CD8-positive, alpha-beta T cell (primary cell): ENCODE measurements at regions of chr6 and their contacts with region 1.

Region 1: GRCh38 chr6:134097114-134097707 is 44.8 kb upstream of the SLC2A12 start:
- DNase-seq: peak; percentile 27 to 78 (median 65)
- ATAC-seq: no peak
- H3K4me3 ChIP-seq: no peak overlapping the region
- H3K4me3 Mint-ChIP-seq: no peak overlapping the region
- H3K27ac ChIP-seq: no peak overlapping the region
- H3K27ac Mint-ChIP-seq: no peak overlapping the region
- H3K4me1 ChIP-seq: no peaks in the 10 kb centered on the region
- H3K4me1 Mint-ChIP-seq: no peaks in the 10 kb centered on the region
- H3K27me3 ChIP-seq: peaks cover 0 to 3% of the 10 kb centered on the region in 2 experiments
- H3K27me3 Mint-ChIP-seq: peaks cover 13% of the 10 kb centered on the region
- CTCF ChIP-seq: peak; percentile 88

Region 2: GRCh38 chr6:132530293-132530974 is 1566.8 kb before region 1 on chr6:
- CTCF ChIA-PET with region 1: interaction called, 4 read pairs
- POLR2A ChIA-PET with region 1: no interaction called
- intact Hi-C with region 1: loop called (anchors 1 to 2 kb)
- DNase-seq: peak; percentile 18 to 81 (median 76)
- ATAC-seq: peak; percentile 74
- H3K4me3 ChIP-seq: no peak overlapping the region
- H3K4me3 Mint-ChIP-seq: no peak overlapping the region
- H3K27ac ChIP-seq: no peak overlapping the region
- H3K27ac Mint-ChIP-seq: no peak overlapping the region
- H3K4me1 ChIP-seq: no peaks in the 10 kb centered on the region
- H3K4me1 Mint-ChIP-seq: peaks cover 3% of the 10 kb centered on the region
- H3K27me3 ChIP-seq: no peaks in the 10 kb centered on the region
- H3K27me3 Mint-ChIP-seq: peaks cover 19% of the 10 kb centered on the region
- CTCF ChIP-seq: peak; percentile 76

Region 3: GRCh38 chr6:132962936-132963868 is 1134.0 kb before region 1 on chr6:
- CTCF ChIA-PET with region 1: no interaction called
- POLR2A ChIA-PET with region 1: no interaction called
- intact Hi-C with region 1: loop called (anchors 2 to 5 kb)
- DNase-seq: peak; percentile 5 to 58 (median 38)
- ATAC-seq: peak; percentile 44
- H3K4me3 ChIP-seq: no peak overlapping the region
- H3K4me3 Mint-ChIP-seq: no peak overlapping the region
- H3K27ac ChIP-seq: no peak overlapping the region
- H3K27ac Mint-ChIP-seq: no peak overlapping the region
- H3K4me1 ChIP-seq: no peaks in the 10 kb centered on the region
- H3K4me1 Mint-ChIP-seq: no peaks in the 10 kb centered on the region
- H3K27me3 ChIP-seq: no peaks in the 10 kb centered on the region
- H3K27me3 Mint-ChIP-seq: peaks cover 29% of the 10 kb centered on the region
- CTCF ChIP-seq: peak; percentile 70

Region 4: GRCh38 chr6:133787859-133788505 is 309.2 kb before region 1 on chr6:
- CTCF ChIA-PET with region 1: no interaction called
- POLR2A ChIA-PET with region 1: no interaction called
- intact Hi-C with region 1: no loop called
- DNase-seq: no peak
- ATAC-seq: no peak
- H3K4me3 ChIP-seq: no peak overlapping the region
- H3K4me3 Mint-ChIP-seq: no peak overlapping the region
- H3K27ac ChIP-seq: no peak overlapping the region
- H3K27ac Mint-ChIP-seq: no peak overlapping the region
- H3K4me1 ChIP-seq: no peaks in the 10 kb centered on the region
- H3K4me1 Mint-ChIP-seq: no peaks in the 10 kb centered on the region
- H3K27me3 ChIP-seq: no peaks in the 10 kb centered on the region
- H3K27me3 Mint-ChIP-seq: peaks cover 6% of the 10 kb centered on the region
- CTCF ChIP-seq: no peak

Region 5: GRCh38 chr6:133837801-133838349 is 259.3 kb before region 1 on chr6:
- CTCF ChIA-PET with region 1: interaction called, 12 read pairs
- POLR2A ChIA-PET with region 1: no interaction called
- intact Hi-C with region 1: loop called in 1 of 2 experiments (anchors 1 kb)
- DNase-seq: peak; percentile 9 to 63 (median 46)
- ATAC-seq: peak; percentile 66
- H3K4me3 ChIP-seq: peak overlapping the region; percentile 37 to 41
- H3K4me3 Mint-ChIP-seq: peak overlapping the region; percentile 72
- H3K27ac ChIP-seq: no peak overlapping the region
- H3K27ac Mint-ChIP-seq: no peak overlapping the region
- H3K4me1 ChIP-seq: no peaks in the 10 kb centered on the region
- H3K4me1 Mint-ChIP-seq: peaks cover 8% of the 10 kb centered on the region
- H3K27me3 ChIP-seq: peaks cover 0 to 9% of the 10 kb centered on the region in 2 experiments
- H3K27me3 Mint-ChIP-seq: peaks cover 40% of the 10 kb centered on the region
- CTCF ChIP-seq: peak; percentile 49

Region 6: GRCh38 chr6:133973109-133973971 is 123.9 kb before region 1 on chr6:
- CTCF ChIA-PET with region 1: interaction called, 22 read pairs
- POLR2A ChIA-PET with region 1: no interaction called
- intact Hi-C with region 1: loop called (anchors 1 kb)
- DNase-seq: peak in 2 of 9 experiments; percentile 58 to 72
- ATAC-seq: peak; percentile 79
- H3K4me3 ChIP-seq: no peak overlapping the region
- H3K4me3 Mint-ChIP-seq: no peak overlapping the region
- H3K27ac ChIP-seq: no peak overlapping the region
- H3K27ac Mint-ChIP-seq: no peak overlapping the region
- H3K4me1 ChIP-seq: no peaks in the 10 kb centered on the region
- H3K4me1 Mint-ChIP-seq: peaks cover 61% of the 10 kb centered on the region
- H3K27me3 ChIP-seq: no peaks in the 10 kb centered on the region
- H3K27me3 Mint-ChIP-seq: no peaks in the 10 kb centered on the region
- CTCF ChIP-seq: peak; percentile 89

Region 7: GRCh38 chr6:134074151-134075055 is 22.8 kb before region 1 on chr6:
- CTCF ChIA-PET with region 1: interaction called, 12 read pairs
- POLR2A ChIA-PET with region 1: no interaction called
- intact Hi-C with region 1: no loop called
- DNase-seq: no peak
- ATAC-seq: no peak
- H3K4me3 ChIP-seq: no peak overlapping the region
- H3K4me3 Mint-ChIP-seq: no peak overlapping the region
- H3K27ac ChIP-seq: no peak overlapping the region
- H3K27ac Mint-ChIP-seq: no peak overlapping the region
- H3K4me1 ChIP-seq: no peaks in the 10 kb centered on the region
- H3K4me1 Mint-ChIP-seq: peaks cover under 1% of the 10 kb centered on the region
- H3K27me3 ChIP-seq: no peaks in the 10 kb centered on the region
- H3K27me3 Mint-ChIP-seq: peaks cover 2% of the 10 kb centered on the region
- CTCF ChIP-seq: no peak

Region 8: DNA sequence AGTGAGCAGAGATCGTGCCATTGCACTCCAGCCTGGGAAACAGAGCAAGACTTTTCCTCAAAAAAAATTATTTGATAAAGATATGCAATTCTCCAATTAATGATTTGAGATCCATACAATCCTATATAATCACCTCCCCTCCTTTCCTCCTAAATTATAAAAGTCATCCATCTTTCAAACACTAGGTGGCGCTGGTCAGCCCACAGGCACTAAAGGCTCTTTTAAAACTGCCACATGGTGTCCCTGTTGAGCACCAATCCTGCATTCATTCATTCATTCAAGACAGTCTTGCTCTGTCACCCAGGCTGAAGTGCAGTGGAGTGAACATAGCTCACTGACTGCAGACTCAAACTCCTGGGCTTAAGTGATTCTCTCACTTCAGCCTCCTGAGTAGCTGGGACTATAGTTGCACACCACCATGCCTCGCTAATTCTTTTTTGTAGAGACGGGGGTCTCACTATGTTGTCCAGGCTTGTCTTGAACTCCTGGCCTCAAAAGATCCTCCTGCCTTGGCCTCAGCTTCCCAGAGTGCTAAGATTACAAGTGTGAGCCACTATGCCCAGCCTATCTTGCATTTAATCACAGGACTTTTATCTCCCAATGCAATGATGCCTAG is 14.0 kb after region 1 on chr6:
- CTCF ChIA-PET with region 1: interaction called, 31 read pairs
- POLR2A ChIA-PET with region 1: no interaction called
- intact Hi-C with region 1: no loop called
- DNase-seq: peak in 6 of 9 experiments; percentile 7 to 77 (median 44)
- ATAC-seq: peak; percentile 96
- H3K4me3 ChIP-seq: no peak overlapping the region
- H3K4me3 Mint-ChIP-seq: no peak overlapping the region
- H3K27ac ChIP-seq: no peak overlapping the region
- H3K27ac Mint-ChIP-seq: no peak overlapping the region
- H3K4me1 ChIP-seq: no peaks in the 10 kb centered on the region
- H3K4me1 Mint-ChIP-seq: peaks cover 3% of the 10 kb centered on the region
- H3K27me3 ChIP-seq: no peaks in the 10 kb centered on the region
- H3K27me3 Mint-ChIP-seq: peaks cover 14% of the 10 kb centered on the region
- CTCF ChIP-seq: peak; percentile 89